H1 (cell line): ENCODE measurements at regions of chr16 and their contacts with region 1.

Region 1: GRCh38 chr16:69726296-69727060 is at the start of gene NQO1:
- DNase-seq: peak; percentile 90 to 96
- H3K4me3 ChIP-seq: peak within 1 kb of the TSS; percentile 49 to 65 (median 60)
- H3K27ac ChIP-seq: peak within 1 kb of the TSS; percentile 88
- H3K4me1 ChIP-seq: peaks cover 3 to 7% (median 6%) of the 10 kb centered on the region in 4 experiments; a peak in 6 of 7 replicates
- H3K27me3 ChIP-seq: no peaks in the 10 kb centered on the region
- CTCF ChIP-seq: no peak
- EP300 ChIP-seq: no peak
- POLR2A ChIP-seq: no peak; a peak in 1 of 3 replicates
- RAD21 ChIP-seq: no peak
- total RNA-seq, gene NQO1: 45.3 and 45.7 TPM in 2 replicates

Region 2: DNA sequence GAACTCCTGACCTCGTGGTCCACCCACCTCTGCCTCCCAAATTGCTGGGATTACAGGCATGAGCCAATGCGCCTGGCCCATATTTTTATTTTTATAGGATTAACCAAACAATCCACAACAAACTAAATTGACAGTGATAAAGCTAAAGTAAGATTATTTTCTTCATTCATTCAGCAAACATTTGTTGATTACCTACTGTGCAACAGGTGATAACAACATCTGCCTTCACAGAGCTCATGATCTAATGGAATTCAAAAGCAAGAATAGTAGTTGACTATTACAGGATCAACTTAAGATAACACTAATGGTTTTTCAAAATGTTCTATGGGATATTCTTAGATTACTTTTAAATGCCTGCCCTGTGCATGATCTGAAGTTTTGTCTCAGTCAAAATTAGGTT is 37.9 kb before region 1 on chr16:
- CTCF ChIA-PET with region 1: no interaction called
- POLR2A ChIA-PET with region 1: no interaction called
- DNase-seq: no peak
- H3K4me3 ChIP-seq: no peak overlapping the region
- H3K27ac ChIP-seq: no peak overlapping the region
- H3K4me1 ChIP-seq: no peaks in the 10 kb centered on the region
- H3K27me3 ChIP-seq: no peaks in the 10 kb centered on the region
- CTCF ChIP-seq: no peak
- EP300 ChIP-seq: no peak
- POLR2A ChIP-seq: no peak
- RAD21 ChIP-seq: no peak

Region 3: GRCh38 chr16:69709456-69710084 is 16.9 kb before region 1 on chr16:
- CTCF ChIA-PET with region 1: interaction called, 88 read pairs
- POLR2A ChIA-PET with region 1: interaction called, 18 read pairs
- DNase-seq: peak in 1 of 2 experiments; percentile 38
- H3K4me3 ChIP-seq: no peak overlapping the region
- H3K27ac ChIP-seq: no peak overlapping the region
- H3K4me1 ChIP-seq: no peaks in the 10 kb centered on the region
- H3K27me3 ChIP-seq: no peaks in the 10 kb centered on the region
- CTCF ChIP-seq: peak in 2 of 3 experiments; percentile 41 to 67; a peak in 2 of 4 replicates
- EP300 ChIP-seq: no peak
- POLR2A ChIP-seq: no peak
- RAD21 ChIP-seq: peak; percentile 74 to 75

Region 4: GRCh38 chr16:69741919-69742904 is 15.7 kb after region 1 on chr16:
- CTCF ChIA-PET with region 1: interaction called, 5 read pairs
- POLR2A ChIA-PET with region 1: interaction called, 63 read pairs
- DNase-seq: no peak
- H3K4me3 ChIP-seq: no peak overlapping the region
- H3K27ac ChIP-seq: no peak overlapping the region
- H3K4me1 ChIP-seq: no peaks in the 10 kb centered on the region
- H3K27me3 ChIP-seq: no peaks in the 10 kb centered on the region
- CTCF ChIP-seq: no peak
- EP300 ChIP-seq: no peak
- POLR2A ChIP-seq: no peak
- RAD21 ChIP-seq: no peak

Region 5: DNA sequence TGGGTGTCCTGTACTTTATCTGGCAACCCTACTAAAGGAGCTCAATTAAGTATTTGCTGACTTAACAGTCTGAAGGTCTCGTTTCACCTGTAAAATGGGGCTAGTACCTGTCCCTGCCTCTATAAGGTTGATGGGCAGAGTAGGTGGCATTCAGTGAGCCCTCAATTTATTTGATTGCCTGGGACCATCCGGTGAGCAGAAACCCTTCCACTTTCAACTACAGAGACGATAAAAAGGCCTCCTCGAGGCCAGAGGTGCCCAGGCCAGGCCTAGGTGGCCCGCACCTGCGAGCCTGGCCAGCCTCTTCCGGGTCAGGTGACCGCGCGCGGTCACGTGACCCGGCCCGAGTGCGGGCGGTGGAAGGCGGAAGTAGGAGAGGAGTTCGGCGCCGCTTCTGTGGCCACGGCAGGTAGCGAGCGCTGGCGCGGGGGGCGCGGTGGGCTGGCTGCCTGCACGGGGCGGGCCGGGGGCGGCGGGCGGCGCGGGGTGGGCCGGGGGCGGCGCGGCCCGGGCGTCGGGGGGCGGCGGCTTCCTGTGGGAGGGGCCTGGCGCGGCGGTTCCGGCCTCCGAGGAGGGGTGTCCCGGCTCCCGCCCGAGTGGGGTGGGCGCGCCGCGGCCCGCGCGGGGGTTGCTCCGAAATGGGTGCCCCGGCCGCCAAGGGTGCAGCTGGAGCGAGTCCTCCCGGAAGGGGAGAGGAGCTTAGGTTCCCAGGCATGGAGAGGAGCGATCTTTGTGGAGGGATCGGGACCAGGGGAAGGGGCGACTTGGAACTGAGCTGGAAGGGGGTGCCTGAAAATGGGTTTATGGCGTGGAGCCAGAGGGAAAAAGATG is 35.7 kb after region 1 on chr16 and contains the start of gene WWP2:
- CTCF ChIA-PET with region 1: interaction called, 4 read pairs
- POLR2A ChIA-PET with region 1: interaction called, 17 read pairs
- DNase-seq: peak; percentile 54 to 79
- H3K4me3 ChIP-seq: peak within 1 kb of the TSS; percentile 84 to 100 (median 96)
- H3K27ac ChIP-seq: peak within 1 kb of the TSS; percentile 66; the same call in 1 of the 2 replicates
- H3K4me1 ChIP-seq: peaks cover 0 to 2% (median 0%) of the 10 kb centered on the region in 4 experiments; a peak in 3 of 7 replicates
- H3K27me3 ChIP-seq: no peaks in the 10 kb centered on the region
- CTCF ChIP-seq: no peak
- EP300 ChIP-seq: 0 out of 3 replicates have a peak, but pooled peaks of 1 of the 2 experiments have one; percentile 76
- POLR2A ChIP-seq: peak; percentile 75 to 82
- RAD21 ChIP-seq: 0 out of 4 replicates have a peak, but pooled peaks of 1 of the 2 experiments have one; percentile 8
- total RNA-seq, gene WWP2: 42.2 and 44.3 TPM in 2 replicates

Region 6: DNA sequence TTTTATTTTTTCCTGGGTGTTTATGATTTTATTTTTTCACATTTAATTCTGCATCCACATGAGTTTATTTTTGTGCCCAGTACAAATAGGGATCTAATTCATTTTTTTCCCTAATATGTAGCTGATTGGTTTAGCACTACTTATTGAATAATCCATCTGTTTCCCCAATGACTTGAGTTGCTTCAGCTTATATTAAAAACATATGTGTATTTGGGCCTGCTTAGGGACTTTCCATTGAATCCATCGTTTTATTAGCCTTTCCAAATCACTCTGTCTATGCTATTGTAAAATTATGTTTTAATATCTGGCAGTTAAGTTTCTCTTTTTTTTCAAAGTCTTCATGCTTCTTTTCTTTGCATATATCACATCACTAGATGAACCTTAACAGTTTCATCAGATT is 77.8 kb after region 1 on chr16:
- CTCF ChIA-PET with region 1: no interaction called
- POLR2A ChIA-PET with region 1: no interaction called
- DNase-seq: no peak
- H3K4me3 ChIP-seq: no peak overlapping the region
- H3K27ac ChIP-seq: no peak overlapping the region
- H3K4me1 ChIP-seq: no peaks in the 10 kb centered on the region
- H3K27me3 ChIP-seq: no peaks in the 10 kb centered on the region
- CTCF ChIP-seq: no peak
- EP300 ChIP-seq: no peak
- POLR2A ChIP-seq: no peak
- RAD21 ChIP-seq: no peak

Region 7: DNA sequence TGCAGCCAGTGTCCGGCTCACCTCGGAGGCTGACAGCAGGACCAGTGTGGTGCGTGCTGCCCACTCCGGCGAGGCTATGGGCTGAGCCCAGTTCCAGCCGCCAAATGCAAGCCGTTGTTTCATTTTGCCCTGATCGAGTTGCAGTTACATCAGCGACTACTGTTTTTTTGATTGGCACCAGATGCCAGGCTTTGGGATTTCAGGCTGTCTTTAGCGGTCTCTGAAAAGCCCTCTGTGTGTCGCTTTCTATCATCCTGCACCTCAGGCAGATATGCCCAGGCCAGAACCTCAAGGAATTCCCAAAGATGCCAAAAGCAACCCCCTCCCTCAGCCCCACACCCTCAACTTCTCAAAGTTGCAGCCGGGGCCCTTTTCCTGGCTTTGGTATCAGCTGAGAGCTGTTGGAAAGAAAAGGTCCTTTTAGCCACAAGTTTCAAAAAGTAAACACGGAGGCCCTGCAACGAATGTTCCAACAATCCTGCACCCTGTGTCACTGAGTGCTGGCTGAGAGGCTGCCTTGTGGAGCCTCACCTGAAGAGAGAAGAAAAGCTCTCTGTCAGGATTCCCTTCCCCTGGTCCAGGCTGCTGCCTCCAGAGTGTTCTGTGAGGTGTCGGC is 94.6 kb after region 1 on chr16:
- CTCF ChIA-PET with region 1: no interaction called
- POLR2A ChIA-PET with region 1: no interaction called
- DNase-seq: no peak
- H3K4me3 ChIP-seq: no peak overlapping the region
- H3K27ac ChIP-seq: no peak overlapping the region; the same call in 1 of the 2 replicates
- H3K4me1 ChIP-seq: peaks cover 3 to 10% (median 5%) of the 10 kb centered on the region in 4 experiments; a peak in 6 of 7 replicates
- H3K27me3 ChIP-seq: no peaks in the 10 kb centered on the region
- CTCF ChIP-seq: no peak
- EP300 ChIP-seq: no peak
- POLR2A ChIP-seq: no peak
- RAD21 ChIP-seq: no peak

Region 8: GRCh38 chr16:69865701-69866100 is 139.2 kb after region 1 on chr16:
- CTCF ChIA-PET with region 1: no interaction called
- POLR2A ChIA-PET with region 1: no interaction called
- DNase-seq: no peak
- H3K4me3 ChIP-seq: no peak overlapping the region
- H3K27ac ChIP-seq: no peak overlapping the region
- H3K4me1 ChIP-seq: no peaks in the 10 kb centered on the region
- H3K27me3 ChIP-seq: no peaks in the 10 kb centered on the region
- CTCF ChIP-seq: no peak
- EP300 ChIP-seq: no peak
- POLR2A ChIP-seq: no peak
- RAD21 ChIP-seq: no peak